ENCODE measurements at regions of chr12 and their contacts with region 1.

Region 1: DNA sequence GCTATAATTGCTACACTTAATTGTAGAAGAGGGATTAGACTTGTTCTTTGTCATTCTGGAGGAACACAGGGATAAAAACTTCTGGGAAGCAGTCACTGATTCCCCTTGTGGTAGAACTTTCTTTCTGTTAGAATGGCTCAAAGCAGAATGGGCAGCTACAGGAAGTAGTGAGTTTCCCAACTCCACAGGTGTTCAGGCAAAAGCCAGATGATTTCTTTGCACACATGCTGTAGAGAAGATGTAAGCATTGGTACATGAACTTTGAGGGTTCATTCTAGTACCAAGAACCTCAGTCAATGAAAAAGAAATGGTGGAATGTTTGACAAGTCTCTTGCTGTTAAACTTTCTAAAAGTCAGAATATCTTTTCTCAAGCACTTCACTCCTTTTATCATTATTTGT is 4.3 kb downstream of the NDUFA9 start:
- DNase-seq: no peak
- ATAC-seq: no peak
- H3K4me3 ChIP-seq: no peak overlapping the region
- H3K27ac ChIP-seq: peak overlapping the region; percentile 7
- H3K4me1 ChIP-seq: peaks cover 39% of the 10 kb centered on the region
- H3K27me3 ChIP-seq: no peaks in the 10 kb centered on the region
- CTCF ChIP-seq: no peak

Region 2: DNA sequence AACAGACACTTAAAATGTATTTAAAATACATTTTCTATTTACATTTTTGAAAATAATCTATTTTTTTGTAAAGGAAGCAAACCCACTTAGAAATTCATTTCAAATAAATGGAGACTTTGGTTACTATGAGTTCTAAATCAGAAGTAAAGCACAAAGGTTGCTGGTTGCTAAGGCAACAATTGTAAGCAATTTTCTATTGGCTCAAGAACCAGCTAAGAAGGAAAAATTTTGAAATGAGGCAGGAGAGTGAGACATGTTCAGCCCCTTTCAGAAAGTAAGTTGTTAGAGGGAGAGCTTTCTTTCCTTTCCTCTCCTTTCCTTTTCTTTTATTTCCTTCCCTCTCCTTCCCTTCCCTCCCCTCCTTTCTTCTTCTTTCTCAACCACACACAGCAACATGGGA is 1081.5 kb before region 1 on chr12:
- intact Hi-C with region 1: no loop called
- DNase-seq: no peak
- ATAC-seq: no peak
- H3K4me3 ChIP-seq: no peak overlapping the region
- H3K27ac ChIP-seq: no peak overlapping the region
- H3K4me1 ChIP-seq: no peaks in the 10 kb centered on the region
- H3K27me3 ChIP-seq: no peaks in the 10 kb centered on the region
- CTCF ChIP-seq: no peak

Region 3: DNA sequence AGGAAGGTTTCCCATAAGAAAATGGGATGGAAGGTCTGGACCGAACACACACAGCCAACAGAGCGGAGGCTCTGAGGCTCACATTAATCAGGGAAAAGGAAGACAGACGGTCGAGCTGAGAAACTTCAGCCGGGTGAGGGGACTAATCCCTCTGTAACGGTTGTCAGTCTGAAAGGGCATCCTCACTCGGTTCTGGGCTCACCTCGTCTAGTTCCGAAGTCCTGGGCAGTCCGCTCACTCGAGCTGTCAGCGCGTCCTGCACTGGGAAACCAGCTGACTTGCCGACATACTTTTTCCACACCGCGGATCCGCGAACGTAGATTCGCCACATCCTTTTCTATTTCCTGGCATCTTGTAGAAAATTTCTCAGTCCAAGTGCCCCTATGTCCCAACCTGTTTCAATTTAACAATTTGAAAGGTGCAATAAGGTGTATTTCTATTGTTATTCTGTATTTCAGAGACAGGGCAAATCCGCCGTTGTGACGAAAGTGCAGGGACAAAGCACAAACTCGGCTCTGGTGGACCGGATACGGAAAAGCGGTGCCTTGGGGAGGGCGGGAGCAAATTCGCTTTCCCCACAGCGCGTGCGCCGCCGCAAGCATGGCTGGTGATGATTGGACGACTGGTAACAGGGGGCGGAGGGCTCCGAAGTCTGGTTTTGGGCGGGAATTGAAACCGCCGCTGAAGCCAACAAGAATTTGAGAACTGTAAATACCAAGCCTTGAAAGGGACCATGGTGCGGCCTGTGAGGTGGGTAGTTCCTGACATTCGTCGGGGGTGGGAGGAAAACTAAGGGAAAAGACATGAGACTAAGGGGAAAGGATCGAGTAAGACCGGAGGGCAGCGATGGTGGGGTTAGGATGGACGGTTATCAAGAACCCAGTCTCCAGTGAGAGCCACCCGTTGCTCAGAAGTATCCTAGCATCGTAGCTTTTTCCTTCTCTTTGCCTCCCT is 114.8 kb before region 1 on chr12 and contains the start of gene RAD51AP1:
- intact Hi-C with region 1: loop called in 1 of 2 experiments (anchors 10 kb)
- DNase-seq: peak; percentile 95 to 98
- ATAC-seq: peak; percentile 100
- H3K4me3 ChIP-seq: peak within 1 kb of the TSS; percentile 80
- H3K27ac ChIP-seq: peak within 1 kb of the TSS; percentile 95
- H3K4me1 ChIP-seq: peaks cover 9% of the 10 kb centered on the region
- H3K27me3 ChIP-seq: no peaks in the 10 kb centered on the region
- CTCF ChIP-seq: no peak
- total RNA-seq, gene RAD51AP1: 0.38 to 0.92 (median 0.44) TPM

Region 4: GRCh38 chr12:5907807-5908206 is 1254.5 kb after region 1 on chr12:
- intact Hi-C with region 1: no loop called
- DNase-seq: no peak
- ATAC-seq: no peak
- H3K4me3 ChIP-seq: no peak overlapping the region
- H3K27ac ChIP-seq: no peak overlapping the region
- H3K4me1 ChIP-seq: no peaks in the 10 kb centered on the region
- H3K27me3 ChIP-seq: peaks cover 0 to 5% (median 0%) of the 10 kb centered on the region in 3 donors
- CTCF ChIP-seq: no peak

Measured in psoas muscle (tissue), 8 donors.